ENCODE measurements at regions of chr7 and their contacts with region 1.

Region 1: GRCh38 chr7:38335492-38336147 is 62.2 kb upstream of the TARP start:
- DNase-seq: peak; percentile 80
- H3K4me3 ChIP-seq: peak overlapping the region; percentile 32
- CTCF ChIP-seq: peak; percentile 100

Region 2: GRCh38 chr7:37901236-37901827 is 434.3 kb before region 1 on chr7:
- CTCF ChIA-PET with region 1: interaction called, 25 read pairs
- POLR2A ChIA-PET with region 1: no interaction called
- DNase-seq: no peak
- H3K4me3 ChIP-seq: no peak overlapping the region
- CTCF ChIP-seq: peak; percentile 42

Region 3: GRCh38 chr7:38178004-38178694 is 157.5 kb before region 1 on chr7 and contains the start of gene STARD3NL:
- CTCF ChIA-PET with region 1: interaction called, 11 read pairs
- POLR2A ChIA-PET with region 1: no interaction called
- DNase-seq: peak; percentile 100
- H3K4me3 ChIP-seq: peak within 1 kb of the TSS; percentile 85
- CTCF ChIP-seq: no peak

Region 4: DNA sequence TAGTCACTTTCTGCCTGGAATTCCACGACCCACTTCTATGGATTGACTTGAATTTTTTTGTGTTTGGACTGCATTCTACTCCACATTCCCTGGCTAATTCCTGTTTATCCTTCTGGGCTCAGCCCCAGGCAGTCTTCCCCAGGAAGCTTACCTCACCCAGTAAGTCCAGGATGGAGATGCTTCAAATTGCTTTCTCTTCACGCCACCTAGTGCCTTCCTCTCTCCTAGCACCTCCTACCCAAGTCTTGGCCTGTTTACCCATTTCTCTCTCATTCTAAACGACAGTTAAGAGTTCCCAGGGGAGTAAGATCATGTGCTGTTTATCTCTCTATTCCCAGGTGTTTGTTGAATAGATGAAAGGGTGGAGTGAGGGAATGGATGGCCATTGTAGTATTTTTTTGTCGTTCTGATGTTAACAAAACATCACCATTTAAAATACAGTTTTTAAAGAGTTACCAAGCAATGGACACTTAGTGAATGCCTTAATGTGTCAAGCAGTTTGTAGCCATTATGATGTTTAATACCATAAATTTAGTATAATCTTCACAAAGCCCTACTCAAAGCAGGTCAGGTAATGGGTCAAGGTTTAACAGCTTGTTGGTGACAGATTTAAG is 16.7 kb before region 1 on chr7:
- CTCF ChIA-PET with region 1: interaction called, 210 read pairs
- POLR2A ChIA-PET with region 1: no interaction called
- DNase-seq: peak; percentile 53
- H3K4me3 ChIP-seq: no peak overlapping the region
- CTCF ChIP-seq: peak; percentile 74

Region 5: DNA sequence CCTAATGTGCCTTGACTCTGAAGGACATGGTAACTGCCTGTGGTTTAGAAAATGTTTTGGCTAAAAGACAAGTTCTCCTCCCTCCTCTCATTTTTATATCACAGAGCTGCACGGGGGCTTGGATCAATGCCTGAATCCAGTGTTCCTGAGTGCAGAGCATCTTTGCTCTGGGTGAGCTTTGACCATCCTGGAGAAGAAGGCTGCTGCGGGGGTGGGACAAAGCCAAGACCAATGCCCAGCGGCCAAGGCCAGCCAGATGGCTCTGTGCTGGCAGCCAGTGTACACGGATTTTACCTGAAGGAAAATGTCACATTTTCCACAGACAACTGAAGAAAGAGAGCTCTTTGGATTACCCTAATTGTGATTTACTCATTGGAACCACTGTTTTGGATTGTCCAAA is 39.8 kb after region 1 on chr7:
- CTCF ChIA-PET with region 1: interaction called, 27 read pairs
- POLR2A ChIA-PET with region 1: no interaction called
- DNase-seq: no peak
- H3K4me3 ChIP-seq: no peak overlapping the region
- CTCF ChIP-seq: no peak

Measured in AG04449 (cell line).